CD4-positive, alpha-beta memory T cell (primary cell): ENCODE measurements at regions of chr14 and their contacts with region 1.

Region 1: GRCh38 chr14:54566410-54567223 is at the start of gene SAMD4A:
- DNase-seq: peak; percentile 58 to 82 (median 66)
- H3K4me3 ChIP-seq: peak within 1 kb of the TSS; percentile 57 to 69
- H3K4me3 Mint-ChIP-seq: peak within 1 kb of the TSS; percentile 92 to 99 (median 96)
- H3K27ac ChIP-seq: peak within 1 kb of the TSS; percentile 79
- H3K27ac Mint-ChIP-seq: peak within 1 kb of the TSS; percentile 88 to 97 (median 95)
- H3K4me1 ChIP-seq: peaks cover 16% of the 10 kb centered on the region
- H3K4me1 Mint-ChIP-seq: peaks cover 8 to 31% (median 11%) of the 10 kb centered on the region in 4 donors
- H3K27me3 ChIP-seq: no peaks in the 10 kb centered on the region
- H3K27me3 Mint-ChIP-seq: peaks cover 2 to 3% of the 10 kb centered on the region in 2 donors
- total RNA-seq, gene SAMD4A: 0.93 to 1.4 TPM

Region 2: DNA sequence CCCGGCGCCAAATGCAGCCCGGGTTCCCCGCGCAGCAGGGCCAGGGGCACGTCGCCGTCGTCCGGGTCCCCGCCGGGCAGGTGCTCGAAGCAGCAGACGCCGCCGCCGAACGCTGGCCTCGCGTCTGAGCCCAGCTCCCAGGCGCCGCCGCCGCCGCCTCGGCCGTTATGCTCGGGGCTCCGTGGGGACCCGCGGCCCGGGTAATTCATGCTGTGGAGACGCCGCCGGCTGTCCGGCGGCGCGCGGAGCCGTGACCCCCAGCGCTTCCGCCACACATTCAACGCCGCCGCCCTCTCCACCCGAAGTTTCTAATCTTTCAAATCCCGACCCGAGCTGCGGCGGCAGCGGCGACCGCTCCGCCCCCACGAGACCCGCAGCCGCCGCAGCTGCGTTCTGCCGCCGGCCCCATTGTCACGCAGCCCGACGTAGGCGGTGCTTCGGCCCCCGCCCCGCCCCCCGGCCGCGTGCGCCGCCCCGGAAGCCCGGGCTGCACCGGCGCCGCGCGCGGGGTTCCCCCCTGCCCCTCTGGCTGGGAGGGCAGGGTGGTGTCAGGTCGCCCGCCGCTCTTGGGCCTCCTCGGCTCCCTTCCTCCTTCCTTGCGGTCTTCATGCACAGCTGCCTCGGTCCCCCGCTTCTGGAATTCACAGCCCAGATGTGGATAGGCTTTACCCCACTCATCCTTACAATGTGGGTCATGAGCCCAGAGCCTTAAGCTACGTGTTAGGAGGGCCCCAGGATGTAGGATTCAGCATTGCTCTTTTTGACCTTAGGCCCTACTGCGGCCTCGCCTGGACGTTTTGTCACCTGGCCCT is 1413.5 kb before region 1 on chr14 and contains the start of gene DDHD1:
- CTCF ChIA-PET with region 1: no interaction called
- POLR2A ChIA-PET with region 1: no interaction called
- intact Hi-C with region 1: loop called (anchors 5 kb)
- DNase-seq: peak; percentile 84 to 89 (median 87)
- H3K4me3 ChIP-seq: peak within 1 kb of the TSS; percentile 87 to 90
- H3K4me3 Mint-ChIP-seq: peak within 1 kb of the TSS; percentile 95 to 100 (median 99)
- H3K27ac ChIP-seq: peak within 1 kb of the TSS; percentile 87
- H3K27ac Mint-ChIP-seq: peak within 1 kb of the TSS; percentile 98 to 99 (median 99)
- H3K4me1 ChIP-seq: peaks cover 46% of the 10 kb centered on the region
- H3K4me1 Mint-ChIP-seq: peaks cover 36 to 58% (median 45%) of the 10 kb centered on the region in 4 donors
- H3K27me3 ChIP-seq: no peaks in the 10 kb centered on the region
- H3K27me3 Mint-ChIP-seq: no peaks in the 10 kb centered on the region
- total RNA-seq, gene DDHD1: 47.0 to 53.5 TPM

Region 3: GRCh38 chr14:54488646-54489317 is 77.8 kb before region 1 on chr14 and contains the start of gene GMFB:
- CTCF ChIA-PET with region 1: interaction called, 14 read pairs
- POLR2A ChIA-PET with region 1: interaction called, 5 read pairs
- intact Hi-C with region 1: loop called (anchors 1 kb)
- DNase-seq: peak; percentile 84 to 88 (median 87)
- H3K4me3 ChIP-seq: peak within 1 kb of the TSS; percentile 50 to 66
- H3K4me3 Mint-ChIP-seq: peak within 1 kb of the TSS; percentile 85 to 97 (median 94)
- H3K27ac ChIP-seq: peak within 1 kb of the TSS; percentile 80
- H3K27ac Mint-ChIP-seq: peak within 1 kb of the TSS; percentile 89 to 99 (median 97)
- H3K4me1 ChIP-seq: peaks cover 57% of the 10 kb centered on the region
- H3K4me1 Mint-ChIP-seq: peaks cover 48 to 70% (median 57%) of the 10 kb centered on the region in 4 donors
- H3K27me3 ChIP-seq: no peaks in the 10 kb centered on the region
- H3K27me3 Mint-ChIP-seq: no peaks in the 10 kb centered on the region
- total RNA-seq, gene GMFB: 31.1 to 36.4 TPM

Region 4: GRCh38 chr14:54642801-54643697 is 76.4 kb after region 1 on chr14:
- CTCF ChIA-PET with region 1: interaction called, 51 read pairs
- POLR2A ChIA-PET with region 1: interaction called, 3 read pairs
- intact Hi-C with region 1: loop called (anchors 1 kb)
- DNase-seq: peak in 4 of 5 donors; percentile 26 to 40 (median 28)
- H3K4me3 ChIP-seq: no peak overlapping the region
- H3K4me3 Mint-ChIP-seq: no peak overlapping the region
- H3K27ac ChIP-seq: no peak overlapping the region
- H3K27ac Mint-ChIP-seq: no peak overlapping the region
- H3K4me1 ChIP-seq: no peaks in the 10 kb centered on the region
- H3K4me1 Mint-ChIP-seq: no peaks in the 10 kb centered on the region
- H3K27me3 ChIP-seq: no peaks in the 10 kb centered on the region
- H3K27me3 Mint-ChIP-seq: no peaks in the 10 kb centered on the region

Region 5: GRCh38 chr14:54654605-54655004 is 88.0 kb after region 1 on chr14:
- CTCF ChIA-PET with region 1: no interaction called
- POLR2A ChIA-PET with region 1: no interaction called
- intact Hi-C with region 1: no loop called
- DNase-seq: no peak
- H3K4me3 ChIP-seq: no peak overlapping the region
- H3K4me3 Mint-ChIP-seq: no peak overlapping the region
- H3K27ac ChIP-seq: no peak overlapping the region
- H3K27ac Mint-ChIP-seq: no peak overlapping the region
- H3K4me1 ChIP-seq: no peaks in the 10 kb centered on the region
- H3K4me1 Mint-ChIP-seq: no peaks in the 10 kb centered on the region
- H3K27me3 ChIP-seq: no peaks in the 10 kb centered on the region
- H3K27me3 Mint-ChIP-seq: peaks cover 4 to 12% of the 10 kb centered on the region in 2 donors

Region 6: DNA sequence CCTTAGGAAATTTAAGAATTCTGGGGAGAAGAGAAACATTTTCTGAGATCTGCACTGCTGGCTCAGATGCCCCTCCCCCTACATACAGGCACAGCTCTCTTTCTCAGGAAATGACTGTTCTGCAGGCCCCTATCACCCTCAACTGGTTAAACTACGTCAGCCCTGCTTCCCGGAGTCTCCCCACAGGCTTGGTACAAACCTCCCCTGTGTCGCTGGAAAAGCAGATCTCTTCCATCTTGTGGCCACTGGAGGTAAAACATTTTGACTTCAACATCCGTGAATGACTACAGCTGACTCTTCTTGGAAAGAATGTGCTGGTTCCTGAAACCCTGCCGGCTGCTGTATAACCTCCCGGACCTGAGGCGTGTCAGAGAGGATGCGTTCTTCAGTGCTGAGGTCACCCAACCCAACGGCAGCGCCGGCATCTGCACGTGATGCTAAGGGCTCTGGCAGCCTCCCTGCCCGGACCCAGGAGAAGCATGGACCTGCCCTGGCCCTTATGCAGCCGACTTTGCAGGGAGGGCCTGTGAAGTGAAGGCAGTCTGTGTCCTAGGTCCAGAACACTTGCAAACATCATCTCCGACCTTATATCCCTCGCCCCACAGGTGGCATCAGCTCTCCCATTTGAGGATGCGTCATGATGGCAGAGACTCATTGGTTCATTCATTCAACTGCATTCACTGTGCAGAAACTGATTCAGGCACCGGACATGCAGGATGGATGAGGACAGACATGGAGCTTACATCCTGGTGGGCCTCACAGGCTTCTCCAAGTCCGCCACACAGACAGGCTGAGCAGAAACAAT is 206.8 kb after region 1 on chr14:
- CTCF ChIA-PET with region 1: interaction called, 245 read pairs
- POLR2A ChIA-PET with region 1: interaction called, 62 read pairs
- intact Hi-C with region 1: loop called (anchors 1 kb)
- DNase-seq: peak; percentile 63 to 92 (median 73)
- H3K4me3 ChIP-seq: peak overlapping the region in 1 of 2 donors; percentile 53
- H3K4me3 Mint-ChIP-seq: peak overlapping the region; percentile 16 to 83 (median 61)
- H3K27ac ChIP-seq: peak overlapping the region; percentile 55
- H3K27ac Mint-ChIP-seq: peak overlapping the region; percentile 82 to 98 (median 89)
- H3K4me1 ChIP-seq: peaks cover 22% of the 10 kb centered on the region
- H3K4me1 Mint-ChIP-seq: peaks cover 18 to 30% (median 22%) of the 10 kb centered on the region in 4 donors
- H3K27me3 ChIP-seq: no peaks in the 10 kb centered on the region
- H3K27me3 Mint-ChIP-seq: peaks cover 1 to 3% of the 10 kb centered on the region in 2 donors

Region 7: DNA sequence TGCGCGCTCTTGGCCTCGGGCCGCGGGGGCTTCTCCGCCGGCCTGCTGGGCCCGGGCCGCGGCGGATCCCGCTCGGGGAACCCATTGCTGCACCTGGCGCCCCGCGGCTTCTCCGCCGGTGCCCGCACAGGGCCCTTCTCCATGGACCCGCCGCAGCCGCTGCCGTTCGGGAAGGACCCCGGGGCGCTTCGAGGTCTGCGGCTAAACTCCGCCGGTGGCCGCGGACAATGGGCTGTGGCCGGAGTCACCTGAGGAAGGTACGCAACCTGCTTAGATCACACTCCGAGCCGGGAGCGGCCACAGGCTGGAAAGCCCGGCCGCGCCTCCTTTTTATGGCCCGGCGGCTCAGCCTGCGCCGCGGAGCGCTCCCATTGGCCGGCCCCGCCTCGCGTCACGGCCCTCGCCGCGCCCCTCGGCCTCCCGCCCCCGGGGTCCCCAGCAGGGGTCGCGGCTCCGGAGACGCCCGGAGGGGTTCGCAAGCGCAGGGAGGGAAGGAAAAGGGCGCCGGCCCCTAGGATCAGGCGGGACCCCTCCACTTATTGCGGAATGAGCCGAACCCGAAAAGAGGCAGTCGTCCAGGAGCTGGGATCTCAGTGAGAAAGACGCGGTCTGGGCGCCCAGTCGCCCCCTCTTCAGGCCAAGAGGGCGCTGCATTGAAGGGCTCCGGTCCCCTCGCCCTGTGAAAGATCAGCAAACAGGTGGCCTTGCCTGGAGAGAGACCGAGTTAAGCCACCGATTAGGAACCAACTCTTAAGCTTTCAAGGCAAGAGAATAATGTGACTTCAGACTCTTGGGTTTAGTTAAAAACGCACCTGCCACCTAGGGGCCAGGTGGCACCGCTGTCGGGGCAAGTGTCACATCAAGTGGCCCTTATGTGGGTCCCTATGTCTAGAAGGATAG is 336.2 kb after region 1 on chr14 and contains the start of gene GCH1:
- CTCF ChIA-PET with region 1: interaction called, 5 read pairs
- POLR2A ChIA-PET with region 1: interaction called, 11 read pairs
- intact Hi-C with region 1: loop called (anchors 1 kb)
- DNase-seq: peak; percentile 73 to 83 (median 77)
- H3K4me3 ChIP-seq: peak within 1 kb of the TSS; percentile 37 to 99
- H3K4me3 Mint-ChIP-seq: peak within 1 kb of the TSS; percentile 90 to 96 (median 92)
- H3K27ac ChIP-seq: peak within 1 kb of the TSS; percentile 96
- H3K27ac Mint-ChIP-seq: peak within 1 kb of the TSS; percentile 89 to 96 (median 94)
- H3K4me1 ChIP-seq: peaks cover 27% of the 10 kb centered on the region
- H3K4me1 Mint-ChIP-seq: peaks cover 14 to 34% (median 26%) of the 10 kb centered on the region in 4 donors
- H3K27me3 ChIP-seq: no peaks in the 10 kb centered on the region
- H3K27me3 Mint-ChIP-seq: no peaks in the 10 kb centered on the region
- total RNA-seq, gene GCH1: 28.4 to 30.2 TPM

Region 8: DNA sequence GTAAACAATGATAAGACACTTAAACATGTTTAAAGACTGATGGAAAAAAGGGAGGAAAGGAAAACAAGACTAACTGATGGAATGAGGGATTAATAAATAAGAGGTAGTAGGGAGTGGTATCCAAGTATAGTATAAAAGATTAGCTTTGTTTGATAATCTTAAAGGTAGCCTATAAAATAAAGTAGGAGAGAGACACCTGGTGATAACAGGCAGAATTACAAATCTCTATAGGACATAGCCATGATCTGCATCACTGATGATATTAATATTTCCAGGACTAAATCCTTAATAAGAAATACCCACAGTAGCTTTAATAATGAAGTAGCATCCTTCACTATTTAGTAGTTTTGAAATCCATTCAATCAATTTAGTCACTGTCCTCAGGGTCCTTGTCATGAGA is 594.4 kb after region 1 on chr14:
- CTCF ChIA-PET with region 1: no interaction called
- POLR2A ChIA-PET with region 1: no interaction called
- intact Hi-C with region 1: loop called (anchors 1 kb)
- DNase-seq: peak in 4 of 5 donors; percentile 42 to 49 (median 46)
- H3K4me3 ChIP-seq: no peak overlapping the region
- H3K4me3 Mint-ChIP-seq: no peak overlapping the region
- H3K27ac ChIP-seq: no peak overlapping the region
- H3K27ac Mint-ChIP-seq: peak overlapping the region in 3 of 7 donors; percentile 14 to 80 (median 48)
- H3K4me1 ChIP-seq: peaks cover 21% of the 10 kb centered on the region
- H3K4me1 Mint-ChIP-seq: peaks cover 16 to 31% (median 18%) of the 10 kb centered on the region in 4 donors
- H3K27me3 ChIP-seq: no peaks in the 10 kb centered on the region
- H3K27me3 Mint-ChIP-seq: no peaks in the 10 kb centered on the region